ENCODE measurements at regions of chr11 and their contacts with region 1.

Region 1: DNA sequence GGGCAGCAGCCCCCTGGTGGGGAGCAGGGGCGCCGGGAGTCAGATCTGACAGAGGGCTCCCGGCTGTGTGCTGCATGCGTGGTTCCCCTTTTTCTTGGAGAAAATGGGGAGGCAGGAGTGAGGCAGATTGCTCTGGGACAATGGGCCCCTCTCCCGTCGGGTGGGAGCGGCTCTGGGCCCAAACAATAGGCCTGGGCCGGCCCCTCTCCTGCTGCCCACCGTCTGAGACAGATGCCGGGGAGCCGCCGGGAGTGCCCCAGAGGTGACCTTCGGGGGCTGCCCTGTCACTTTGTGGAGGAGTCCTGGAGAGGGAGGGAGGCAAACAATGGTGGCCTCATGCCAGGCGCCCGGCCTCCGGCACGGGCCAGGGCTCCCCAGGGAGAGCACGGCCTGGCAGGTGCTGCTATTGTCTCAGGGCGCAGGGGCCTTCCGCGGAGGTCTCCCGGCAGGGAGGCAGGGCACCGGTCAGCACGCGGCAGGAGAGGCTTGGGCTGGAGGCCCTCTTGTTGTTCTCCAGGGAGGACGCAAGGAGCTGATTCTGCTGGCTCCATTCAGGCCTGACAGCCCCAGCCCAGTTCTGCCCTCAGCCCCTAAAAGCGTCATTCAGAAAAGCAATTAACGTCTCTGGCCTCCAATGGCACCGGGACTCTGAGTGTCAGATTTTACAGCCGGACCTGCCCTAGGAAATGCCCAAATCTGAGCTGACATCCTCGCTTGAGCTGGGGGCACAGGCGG is 44.8 kb downstream of the SMIM38 start:
- DNase-seq: peak; percentile 74
- ATAC-seq: no peak

Region 2: GRCh38 chr11:69131644-69132300 is 68.7 kb before region 1 on chr11:
- intact Hi-C with region 1: loop called (anchors 5 kb)
- DNase-seq: no peak
- ATAC-seq: peak; percentile 72

Region 3: DNA sequence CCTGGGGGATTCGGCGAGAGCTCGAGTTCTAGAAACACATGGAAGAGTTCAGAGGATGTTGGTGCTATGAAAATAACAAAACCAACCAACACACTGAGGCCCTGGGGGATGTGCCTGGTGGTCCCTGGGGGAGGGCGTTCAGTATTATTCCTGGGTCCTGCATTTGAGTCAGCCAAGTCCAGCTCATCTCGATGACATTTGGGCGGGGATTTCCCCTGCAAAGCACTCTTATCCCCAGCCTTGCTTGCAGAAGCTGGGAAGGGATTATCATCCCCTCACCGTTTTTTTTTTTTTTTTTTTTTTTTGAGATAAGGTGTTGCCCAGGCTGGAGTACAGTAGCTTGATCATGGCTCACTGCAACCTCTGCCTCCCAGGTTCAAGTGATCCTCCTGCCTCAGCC is 46.8 kb before region 1 on chr11:
- intact Hi-C with region 1: no loop called
- DNase-seq: no peak
- ATAC-seq: no peak